Naive thymus-derived CD8-positive, alpha-beta T cell (primary cell): ENCODE measurements at regions of chr5 and their contacts with region 1.

Region 1: DNA sequence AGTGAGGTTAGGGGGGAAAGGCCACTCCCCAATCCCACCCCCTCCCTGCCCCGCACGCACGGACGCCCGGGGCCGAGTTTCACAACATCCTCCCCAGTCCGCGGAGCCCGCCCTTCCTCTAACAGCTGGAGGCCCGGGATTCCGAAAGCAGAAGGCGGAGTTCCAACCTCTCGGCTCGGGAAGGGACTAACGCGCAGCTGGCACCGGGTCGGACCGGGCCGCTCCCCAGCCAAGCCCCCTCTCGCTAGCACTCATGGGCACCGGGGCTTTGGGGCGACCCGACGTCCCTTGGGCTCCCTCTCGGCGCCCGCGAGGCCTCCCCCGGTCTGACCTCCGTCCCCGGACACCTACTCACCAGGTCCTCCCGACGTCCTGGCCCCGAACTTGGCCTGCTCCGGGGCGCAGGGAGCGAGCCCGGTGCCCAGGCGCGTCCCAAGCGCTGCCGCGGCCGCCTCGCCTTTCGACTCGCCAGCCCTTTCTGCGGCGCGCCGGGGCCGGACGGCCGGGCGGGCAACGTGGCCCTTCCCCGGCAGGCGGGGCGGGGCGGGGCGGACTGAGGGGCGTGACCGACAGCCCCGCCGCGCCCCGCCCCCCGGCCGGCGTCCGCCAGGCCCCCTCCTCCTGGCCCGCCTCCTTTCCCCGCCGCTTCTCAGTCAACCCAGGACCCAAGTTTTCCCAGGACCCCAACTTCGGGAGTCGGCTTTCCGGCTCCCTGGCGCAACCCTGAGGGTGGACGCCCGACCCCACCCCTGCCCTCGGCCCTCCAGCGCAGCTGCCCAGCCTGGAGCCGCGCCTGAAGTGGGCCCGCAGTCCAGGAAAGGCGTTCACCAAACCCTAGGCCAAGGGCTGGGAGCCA is at the start of gene MGAT1:
- DNase-seq: peak; percentile 43 to 82 (median 68)
- ATAC-seq: peak; percentile 44 to 46
- H3K4me3 Mint-ChIP-seq: peak within 1 kb of the TSS; percentile 84 to 99 (median 93)
- H3K27ac Mint-ChIP-seq: peak within 1 kb of the TSS; percentile 93 to 100 (median 99)
- H3K4me1 Mint-ChIP-seq: peaks cover 58 to 88% (median 85%) of the 10 kb centered on the region in 4 donors
- H3K27me3 Mint-ChIP-seq: no peaks in the 10 kb centered on the region
- polyA plus RNA-seq, gene MGAT1: 108 to 149 (median 111) TPM

Region 2: DNA sequence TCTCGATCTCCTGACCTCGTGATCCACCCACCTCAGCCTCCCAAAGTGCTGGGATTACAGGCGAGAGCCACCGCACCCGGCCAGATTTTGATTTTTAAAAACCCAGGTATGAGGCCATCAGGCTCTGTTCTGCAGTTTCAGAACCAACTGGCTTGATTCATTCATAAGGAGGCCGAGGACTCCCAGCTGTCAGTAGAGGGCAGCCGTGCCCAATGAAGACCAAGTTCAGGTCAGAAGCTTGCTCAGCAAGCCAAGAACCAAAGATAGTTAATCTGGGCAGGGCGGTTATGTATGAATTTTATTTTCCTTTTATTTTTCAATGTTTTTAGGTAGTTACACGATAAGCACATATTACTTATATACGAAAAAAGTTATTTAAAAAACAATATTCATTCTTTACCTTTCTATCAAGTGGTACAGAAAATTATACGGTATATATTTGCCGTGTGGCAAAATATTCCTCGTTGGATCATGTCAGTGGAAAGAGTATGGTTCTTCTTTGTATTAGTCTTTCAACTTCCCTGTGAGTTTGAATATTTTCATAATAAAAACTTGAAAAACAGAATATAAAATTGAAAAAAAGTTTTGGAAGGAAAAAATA is 18.0 kb before region 1 on chr5:
- POLR2A ChIA-PET with region 1: interaction called, 22 read pairs
- DNase-seq: peak; percentile 48 to 91 (median 70)
- ATAC-seq: peak; percentile 78 to 91
- H3K4me3 Mint-ChIP-seq: no peak overlapping the region
- H3K27ac Mint-ChIP-seq: peak overlapping the region; percentile 8 to 87 (median 47)
- H3K4me1 Mint-ChIP-seq: peaks cover 23 to 57% (median 44%) of the 10 kb centered on the region in 4 donors
- H3K27me3 Mint-ChIP-seq: no peaks in the 10 kb centered on the region

Region 3: DNA sequence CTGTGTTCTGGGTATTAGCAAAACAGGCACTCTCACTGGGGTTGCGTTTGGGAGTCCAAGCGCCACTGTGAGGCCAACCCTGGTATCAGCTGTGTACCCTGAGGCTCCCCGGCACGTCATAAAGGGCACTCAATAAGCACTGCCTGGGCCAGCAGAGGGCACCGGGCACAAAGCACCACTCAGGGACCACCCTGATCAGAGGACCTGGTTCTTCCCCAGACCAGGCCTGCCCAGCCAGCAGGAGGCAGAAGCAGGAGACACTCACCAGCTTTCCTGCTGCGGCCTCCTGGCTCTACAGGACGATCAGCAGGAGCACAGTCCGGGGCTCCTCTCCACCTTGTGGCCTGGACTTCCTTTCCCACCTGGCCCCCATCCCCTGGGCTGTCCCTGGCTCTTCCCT is 12.5 kb before region 1 on chr5:
- POLR2A ChIA-PET with region 1: interaction called, 22 read pairs
- DNase-seq: peak in 2 of 10 donors; percentile 27 to 68
- ATAC-seq: peak; percentile 71 to 86
- H3K4me3 Mint-ChIP-seq: no peak overlapping the region
- H3K27ac Mint-ChIP-seq: peak overlapping the region; percentile 24 to 88 (median 73)
- H3K4me1 Mint-ChIP-seq: peaks cover 30 to 74% (median 56%) of the 10 kb centered on the region in 4 donors
- H3K27me3 Mint-ChIP-seq: no peaks in the 10 kb centered on the region

Region 4: GRCh38 chr5:180839925-180840324 is 37.4 kb after region 1 on chr5:
- POLR2A ChIA-PET with region 1: interaction called, 642 read pairs
- DNase-seq: no peak
- ATAC-seq: no peak
- H3K4me3 Mint-ChIP-seq: no peak overlapping the region
- H3K27ac Mint-ChIP-seq: no peak overlapping the region
- H3K4me1 Mint-ChIP-seq: peaks cover 7 to 18% (median 10%) of the 10 kb centered on the region in 4 donors
- H3K27me3 Mint-ChIP-seq: no peaks in the 10 kb centered on the region

Region 5: GRCh38 chr5:180908998-180909731 is 106.6 kb after region 1 on chr5:
- POLR2A ChIA-PET with region 1: no interaction called
- DNase-seq: peak in 1 of 10 donors; percentile 0
- ATAC-seq: no peak
- H3K4me3 Mint-ChIP-seq: no peak overlapping the region
- H3K27ac Mint-ChIP-seq: peak overlapping the region in 1 of 10 donors; percentile 55
- H3K4me1 Mint-ChIP-seq: peaks cover 0 to 2% (median 0%) of the 10 kb centered on the region in 4 donors
- H3K27me3 Mint-ChIP-seq: peaks cover 11 to 38% (median 27%) of the 10 kb centered on the region in 5 donors